Cardiac septum (tissue), 1 donor: ENCODE measurements at regions of chr7 and their contacts with region 1.

Region 1: GRCh38 chr7:93902777-93903423 is 3.5 kb upstream of the GNGT1 start:
- DNase-seq: no peak

Region 2: DNA sequence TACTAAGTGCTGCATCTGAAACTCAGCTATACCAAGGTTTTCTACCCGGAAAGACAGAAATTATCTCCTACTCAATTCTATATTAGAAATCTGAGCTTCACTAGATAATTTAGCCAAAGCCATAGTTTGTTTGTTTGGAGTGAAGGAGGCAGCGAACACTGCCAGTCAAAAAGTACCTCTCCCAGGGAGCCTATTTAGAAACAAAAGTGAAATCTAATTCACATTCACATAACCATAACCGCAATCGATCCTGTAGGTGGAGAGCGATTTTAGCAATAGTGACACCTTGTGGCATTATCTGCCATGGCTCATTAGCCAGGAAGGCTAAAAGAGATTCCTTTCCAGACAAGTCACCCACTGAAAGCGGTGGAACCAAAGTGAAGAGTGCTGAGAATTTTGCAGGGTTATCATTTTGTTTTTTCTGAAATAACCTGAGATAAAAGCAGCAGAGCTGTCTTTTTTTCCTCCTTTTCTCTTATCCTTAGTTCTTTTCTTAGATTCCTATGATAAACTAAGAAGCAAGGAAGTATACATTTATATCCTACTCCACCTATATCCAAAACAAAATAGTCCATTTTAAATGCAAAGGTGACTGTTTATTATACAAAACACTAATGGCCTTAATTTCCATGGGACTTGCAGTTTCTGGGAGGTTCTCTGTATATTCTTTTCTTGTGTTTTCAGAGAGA is 184.9 kb after region 1 on chr7:
- intact Hi-C with region 1: loop called (anchors 5 kb)
- DNase-seq: no peak

Region 3: GRCh38 chr7:94170836-94171235 is 267.9 kb after region 1 on chr7:
- intact Hi-C with region 1: loop called (anchors 10 kb)
- DNase-seq: no peak